ENCODE measurements at regions of chr2 and their contacts with region 1.

Region 1: GRCh38 chr2:96208143-96209010 is at the start of gene STARD7:
- DNase-seq: peak; percentile 89 to 97 (median 95)
- ATAC-seq: peak; percentile 89 to 90
- H3K4me3 Mint-ChIP-seq: peak within 1 kb of the TSS; percentile 90 to 99 (median 94)
- H3K27ac Mint-ChIP-seq: peak within 1 kb of the TSS; percentile 88 to 98 (median 94)
- H3K4me1 Mint-ChIP-seq: peaks cover 22 to 62% (median 56%) of the 10 kb centered on the region in 4 donors
- H3K27me3 Mint-ChIP-seq: no peaks in the 10 kb centered on the region
- polyA plus RNA-seq, gene STARD7: 114 to 143 (median 137) TPM

Region 2: GRCh38 chr2:96116879-96117697 is 91.3 kb before region 1 on chr2:
- POLR2A ChIA-PET with region 1: no interaction called
- DNase-seq: peak; percentile 32 to 77 (median 68)
- ATAC-seq: peak; percentile 82 to 83
- H3K4me3 Mint-ChIP-seq: peak overlapping the region; percentile 41 to 81 (median 67)
- H3K27ac Mint-ChIP-seq: peak overlapping the region in 5 of 10 donors; percentile 33 to 85 (median 39)
- H3K4me1 Mint-ChIP-seq: peaks cover 16 to 45% (median 22%) of the 10 kb centered on the region in 4 donors
- H3K27me3 Mint-ChIP-seq: peaks cover 14 to 37% (median 32%) of the 10 kb centered on the region in 5 donors

Region 3: DNA sequence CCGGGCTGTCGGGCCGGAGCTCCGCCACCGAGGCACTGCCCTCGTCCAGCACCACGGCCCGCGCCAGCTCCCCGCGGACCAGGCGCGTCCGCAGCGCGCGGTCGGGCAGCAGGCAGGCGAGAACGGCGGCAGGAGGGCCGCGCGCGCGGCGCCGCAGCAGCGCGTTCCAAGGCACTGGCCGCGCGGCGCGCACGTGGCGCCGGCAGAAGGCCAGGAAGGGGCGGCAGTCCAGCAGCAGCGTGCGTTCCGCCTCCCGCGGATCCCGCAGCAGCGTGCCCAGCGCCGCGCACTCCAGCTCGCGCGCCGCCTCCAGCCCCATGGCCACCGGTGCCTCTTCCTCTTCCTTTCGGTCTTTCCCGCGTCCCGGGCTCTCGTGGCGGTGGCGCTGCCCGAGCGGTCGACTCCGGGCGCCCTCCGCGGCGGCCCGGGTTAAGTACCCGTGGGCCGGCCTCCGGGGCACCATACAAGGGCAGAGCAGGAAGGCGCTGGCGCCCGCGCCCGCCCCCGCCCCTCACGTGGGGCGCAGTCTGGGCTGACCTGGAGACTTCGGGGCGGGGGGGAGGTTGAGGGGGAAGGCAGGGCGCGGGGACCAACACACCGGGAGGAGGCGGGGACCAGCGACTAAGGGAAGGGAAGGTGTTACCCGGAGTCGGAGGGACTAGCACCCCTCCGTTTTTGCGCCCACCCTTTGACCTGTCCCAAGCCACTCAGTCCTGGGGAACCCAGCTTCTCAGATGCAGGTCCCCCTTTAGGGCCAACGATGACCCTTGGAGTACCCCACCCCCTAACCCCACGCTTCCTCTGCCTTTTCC is 63.1 kb before region 1 on chr2 and contains the start of gene DUSP2:
- POLR2A ChIA-PET with region 1: interaction called, 20 read pairs
- DNase-seq: peak; percentile 78 to 93 (median 87)
- ATAC-seq: peak; percentile 40 to 54
- H3K4me3 Mint-ChIP-seq: peak within 1 kb of the TSS; percentile 91 to 97 (median 95)
- H3K27ac Mint-ChIP-seq: peak within 1 kb of the TSS; percentile 97 to 100 (median 100)
- H3K4me1 Mint-ChIP-seq: peaks cover 27 to 77% (median 68%) of the 10 kb centered on the region in 4 donors
- H3K27me3 Mint-ChIP-seq: peaks cover 0 to 1% (median 0%) of the 10 kb centered on the region in 5 donors
- polyA plus RNA-seq, gene DUSP2: 24.3 to 459 (median 60.7) TPM

Region 4: DNA sequence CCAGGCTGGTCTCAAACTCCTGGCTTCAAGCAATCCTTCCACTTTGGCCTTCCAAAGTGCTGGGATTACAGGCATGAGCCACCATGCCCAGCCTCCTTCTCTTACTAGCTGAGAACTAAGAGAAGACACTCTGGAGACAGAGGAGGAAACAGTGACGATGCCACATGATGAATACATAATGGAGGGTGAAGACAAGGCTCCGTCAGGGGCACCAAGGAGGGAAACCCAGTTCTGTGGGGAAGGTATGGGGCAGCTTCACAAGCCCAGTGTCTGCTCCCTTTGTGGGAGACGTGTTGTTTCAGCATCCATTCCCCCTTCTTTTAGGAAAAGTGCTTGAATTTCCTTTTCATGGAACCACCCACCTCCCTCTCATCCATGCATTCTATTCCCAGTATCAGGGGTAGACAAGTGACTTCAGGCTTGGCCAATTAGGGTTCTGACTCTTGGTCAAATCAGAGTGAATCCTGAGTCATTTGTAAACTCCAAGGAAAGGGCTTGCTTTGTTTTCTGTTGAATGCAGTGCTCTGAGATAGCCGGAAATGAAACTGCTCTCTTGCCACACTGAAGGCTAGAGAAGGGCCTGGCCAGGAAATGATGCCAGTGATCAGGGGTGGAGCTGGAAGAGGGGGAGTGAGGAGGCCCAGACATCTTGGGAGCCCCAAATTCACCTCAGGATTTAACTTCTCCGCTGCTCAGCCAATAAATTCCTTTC is 33.7 kb after region 1 on chr2:
- POLR2A ChIA-PET with region 1: interaction called, 32 read pairs
- DNase-seq: peak in 7 of 10 donors; percentile 23 to 49 (median 27)
- ATAC-seq: peak; percentile 81 to 85
- H3K4me3 Mint-ChIP-seq: peak overlapping the region; percentile 42 to 80 (median 70)
- H3K27ac Mint-ChIP-seq: peak overlapping the region; percentile 85 to 97 (median 94)
- H3K4me1 Mint-ChIP-seq: peaks cover 28 to 57% (median 49%) of the 10 kb centered on the region in 4 donors
- H3K27me3 Mint-ChIP-seq: no peaks in the 10 kb centered on the region

Region 5: DNA sequence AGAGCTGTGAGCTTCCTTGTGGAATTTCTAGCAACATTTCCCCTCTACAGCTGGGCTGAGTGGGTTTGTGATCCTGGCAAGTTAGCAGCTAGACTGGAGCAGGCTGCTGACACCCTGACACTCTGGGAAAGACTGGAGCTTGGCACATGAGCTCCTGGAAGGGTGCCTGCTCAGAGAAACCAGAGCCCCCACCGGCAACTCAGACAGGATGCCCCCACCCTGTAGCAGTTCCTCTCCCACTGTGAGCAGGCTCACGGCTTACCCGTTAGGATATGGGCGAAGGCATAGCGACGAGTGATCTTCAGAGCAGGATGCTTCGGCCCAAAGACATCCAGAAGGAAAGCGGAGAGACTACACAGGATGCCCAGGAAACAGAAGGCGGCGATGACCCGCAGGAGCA is 46.2 kb after region 1 on chr2:
- POLR2A ChIA-PET with region 1: interaction called, 23 read pairs
- DNase-seq: no peak
- ATAC-seq: no peak
- H3K4me3 Mint-ChIP-seq: peak overlapping the region in 6 of 10 donors; percentile 5 to 81 (median 42)
- H3K27ac Mint-ChIP-seq: peak overlapping the region; percentile 11 to 96 (median 84)
- H3K4me1 Mint-ChIP-seq: peaks cover 28 to 62% (median 60%) of the 10 kb centered on the region in 4 donors
- H3K27me3 Mint-ChIP-seq: no peaks in the 10 kb centered on the region

Region 6: GRCh38 chr2:96260404-96261260 is 52.3 kb after region 1 on chr2:
- POLR2A ChIA-PET with region 1: interaction called, 23 read pairs
- DNase-seq: peak in 5 of 10 donors; percentile 13 to 38 (median 28)
- ATAC-seq: peak; percentile 20 to 55
- H3K4me3 Mint-ChIP-seq: peak overlapping the region in 9 of 10 donors; percentile 7 to 61 (median 36)
- H3K27ac Mint-ChIP-seq: peak overlapping the region; percentile 21 to 96 (median 80)
- H3K4me1 Mint-ChIP-seq: peaks cover 32 to 91% (median 79%) of the 10 kb centered on the region in 4 donors
- H3K27me3 Mint-ChIP-seq: no peaks in the 10 kb centered on the region

Region 7: DNA sequence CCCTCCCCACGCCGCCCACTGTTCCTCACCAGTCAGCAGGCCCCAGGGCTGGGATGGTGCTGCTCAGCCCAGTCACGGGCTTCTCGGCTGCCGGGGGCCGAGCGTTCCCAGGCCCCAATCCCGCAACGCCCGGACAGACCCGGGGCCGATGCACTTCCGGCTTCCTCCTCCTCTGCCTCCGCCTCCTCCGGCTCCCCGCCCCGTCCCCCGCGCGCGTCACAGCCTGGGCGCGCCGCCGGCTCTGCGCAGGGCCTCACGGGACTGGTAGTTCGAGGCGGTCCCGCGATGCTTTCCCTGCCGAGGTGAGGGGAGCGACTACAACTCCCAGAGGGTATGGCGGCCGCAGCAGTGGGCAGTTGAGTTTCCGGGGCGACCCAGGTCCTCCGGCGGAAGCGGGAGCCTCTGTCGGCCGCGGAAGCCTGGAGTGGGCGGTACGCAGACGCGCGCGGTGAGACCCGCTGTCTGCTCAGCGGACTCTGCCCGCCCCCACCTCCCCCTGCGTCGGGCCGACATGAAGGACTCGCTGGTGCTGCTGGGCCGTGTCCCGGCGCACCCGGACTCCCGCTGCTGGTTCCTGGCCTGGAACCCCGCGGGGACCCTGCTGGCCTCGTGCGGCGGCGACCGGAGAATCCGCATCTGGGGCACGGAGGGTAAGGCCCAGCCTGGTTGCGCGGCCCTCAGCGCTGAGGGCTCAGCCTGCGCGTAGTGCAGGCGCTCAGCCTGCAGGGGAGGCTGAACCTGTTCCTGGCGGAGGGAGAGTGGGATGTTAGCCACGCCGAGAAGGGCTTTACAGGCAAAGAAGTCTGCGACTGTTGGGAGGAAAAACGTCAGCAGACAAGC is 57.7 kb after region 1 on chr2 and contains the starts of genes CIAO1 and TMEM127:
- POLR2A ChIA-PET with region 1: interaction called, 23 read pairs
- DNase-seq: peak; percentile 93 to 98 (median 97)
- ATAC-seq: peak; percentile 92
- H3K4me3 Mint-ChIP-seq: peak within 1 kb of the TSS; percentile 89 to 99 (median 96)
- H3K27ac Mint-ChIP-seq: peak within 1 kb of the TSS; percentile 87 to 98 (median 94)
- H3K4me1 Mint-ChIP-seq: peaks cover 27 to 59% (median 51%) of the 10 kb centered on the region in 4 donors
- H3K27me3 Mint-ChIP-seq: no peaks in the 10 kb centered on the region
- polyA plus RNA-seq, gene CIAO1: 85.5 to 106 (median 95.2) TPM
- polyA plus RNA-seq, gene TMEM127: 22.1 to 35.7 (median 22.3) TPM

Measured in naive thymus-derived CD8-positive, alpha-beta T cell (primary cell).